ENCODE measurements at regions of chr11 and their contacts with region 1.

Region 1: GRCh38 chr11:130861902-130862860 is 54.1 kb downstream of the SNX19 start:
- DNase-seq: peak; percentile 89
- H3K4me3 Mint-ChIP-seq: no peak overlapping the region
- H3K27ac Mint-ChIP-seq: no peak overlapping the region
- H3K4me1 Mint-ChIP-seq: peaks cover 3% of the 10 kb centered on the region
- H3K27me3 Mint-ChIP-seq: peaks cover under 1% of the 10 kb centered on the region

Region 2: DNA sequence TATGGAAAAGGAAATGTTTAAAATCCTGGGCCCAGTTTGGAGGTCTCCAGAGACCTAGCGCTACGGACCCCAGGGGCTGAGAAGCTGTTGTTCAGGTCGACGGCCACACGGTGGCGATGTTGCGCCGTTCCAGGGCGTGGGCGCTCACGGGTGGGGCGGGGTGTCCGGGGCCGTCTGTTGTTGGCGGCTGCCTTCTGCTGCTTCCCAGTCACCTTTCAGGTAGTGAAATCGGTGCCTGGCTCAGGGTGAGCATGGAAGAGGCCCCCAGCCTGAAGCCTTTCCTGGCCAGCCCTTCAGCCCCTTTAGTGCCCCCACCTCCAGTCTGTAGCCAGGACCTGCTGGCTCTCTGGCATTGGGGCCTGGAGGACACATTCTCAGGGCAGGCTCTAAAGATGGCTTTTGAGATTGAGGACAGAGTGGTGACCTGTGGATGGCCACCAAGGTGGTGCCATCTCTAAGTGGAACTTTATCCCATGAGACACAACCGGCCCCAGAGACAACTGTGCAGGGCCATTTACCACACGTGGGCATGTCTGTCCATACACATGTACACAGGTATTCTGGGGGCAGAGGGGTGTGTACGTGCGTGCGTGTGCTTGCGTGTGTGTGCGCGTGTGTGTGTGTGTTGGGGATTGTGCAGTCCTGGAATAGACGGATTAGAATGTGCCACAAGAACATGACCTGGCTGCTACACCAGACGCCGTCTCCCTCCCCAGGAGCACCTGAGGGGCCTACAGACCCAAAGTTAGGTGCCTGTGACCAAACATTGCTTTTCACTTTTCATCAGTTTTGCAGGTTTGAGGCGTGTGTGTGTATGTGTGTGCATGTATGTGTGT is 648.8 kb before region 1 on chr11:
- CTCF ChIA-PET with region 1: interaction called, 22 read pairs
- POLR2A ChIA-PET with region 1: no interaction called
- intact Hi-C with region 1: loop called (anchors 2 kb)
- DNase-seq: peak; percentile 79
- H3K4me3 Mint-ChIP-seq: no peak overlapping the region
- H3K27ac Mint-ChIP-seq: no peak overlapping the region
- H3K4me1 Mint-ChIP-seq: no peaks in the 10 kb centered on the region
- H3K27me3 Mint-ChIP-seq: no peaks in the 10 kb centered on the region

Region 3: DNA sequence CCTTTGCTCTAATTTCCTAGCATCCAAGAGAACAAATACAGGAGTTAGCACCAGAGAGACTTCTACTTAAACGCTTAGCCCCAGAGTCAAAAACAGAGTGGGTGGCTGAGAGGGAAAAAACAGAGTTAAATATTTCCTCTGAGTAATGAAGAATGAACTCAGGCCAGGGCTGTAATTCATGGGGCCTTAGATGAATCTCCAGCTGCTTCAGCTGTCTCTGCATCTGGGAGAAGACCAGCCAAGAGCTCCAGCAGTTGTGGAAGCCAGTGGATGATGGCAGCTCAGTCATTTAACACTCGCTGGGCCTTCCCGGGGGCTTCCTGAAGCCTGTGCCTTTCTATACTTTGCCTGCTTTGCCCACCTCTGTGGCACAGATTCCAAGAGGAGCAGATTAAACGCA is 419.4 kb before region 1 on chr11:
- CTCF ChIA-PET with region 1: interaction called, 347 read pairs
- POLR2A ChIA-PET with region 1: no interaction called
- intact Hi-C with region 1: no loop called
- DNase-seq: no peak
- H3K4me3 Mint-ChIP-seq: no peak overlapping the region
- H3K27ac Mint-ChIP-seq: no peak overlapping the region
- H3K4me1 Mint-ChIP-seq: peaks cover 10% of the 10 kb centered on the region
- H3K27me3 Mint-ChIP-seq: peaks cover 12% of the 10 kb centered on the region

Region 4: GRCh38 chr11:130882138-130882551 is 20.0 kb after region 1 on chr11:
- CTCF ChIA-PET with region 1: interaction called, 27 read pairs
- POLR2A ChIA-PET with region 1: no interaction called
- intact Hi-C with region 1: no loop called
- DNase-seq: no peak
- H3K4me3 Mint-ChIP-seq: no peak overlapping the region
- H3K27ac Mint-ChIP-seq: no peak overlapping the region
- H3K4me1 Mint-ChIP-seq: peaks cover 17% of the 10 kb centered on the region
- H3K27me3 Mint-ChIP-seq: no peaks in the 10 kb centered on the region

Region 5: GRCh38 chr11:130894322-130895025 is 32.3 kb after region 1 on chr11:
- CTCF ChIA-PET with region 1: interaction called, 68 read pairs
- POLR2A ChIA-PET with region 1: no interaction called
- intact Hi-C with region 1: loop called (anchors 1 kb)
- DNase-seq: peak; percentile 80
- H3K4me3 Mint-ChIP-seq: no peak overlapping the region
- H3K27ac Mint-ChIP-seq: no peak overlapping the region
- H3K4me1 Mint-ChIP-seq: no peaks in the 10 kb centered on the region
- H3K27me3 Mint-ChIP-seq: no peaks in the 10 kb centered on the region

Region 6: DNA sequence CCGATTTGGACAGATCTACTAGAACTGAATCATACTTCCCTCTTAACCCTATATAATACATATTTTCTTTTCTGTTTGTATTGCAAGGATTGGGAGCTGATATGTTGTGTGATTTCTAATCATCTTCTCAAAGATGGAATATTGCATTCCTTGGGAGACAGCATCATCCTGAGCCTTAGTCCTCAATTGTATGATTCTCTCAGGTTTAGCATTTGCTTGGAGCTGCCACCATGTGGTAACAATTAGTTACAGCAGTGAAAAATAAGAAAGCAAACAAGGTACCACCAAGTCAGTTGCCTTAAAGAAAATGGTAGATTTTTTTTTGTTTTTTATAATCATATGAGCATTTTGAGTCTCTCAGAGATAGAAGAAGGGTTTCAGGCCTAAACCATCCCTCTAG is 42.2 kb after region 1 on chr11:
- CTCF ChIA-PET with region 1: interaction called, 20 read pairs
- POLR2A ChIA-PET with region 1: no interaction called
- intact Hi-C with region 1: no loop called
- DNase-seq: no peak
- H3K4me3 Mint-ChIP-seq: no peak overlapping the region
- H3K27ac Mint-ChIP-seq: no peak overlapping the region
- H3K4me1 Mint-ChIP-seq: peaks cover 32% of the 10 kb centered on the region
- H3K27me3 Mint-ChIP-seq: no peaks in the 10 kb centered on the region

Region 7: GRCh38 chr11:130916238-130916855 is 54.2 kb after region 1 on chr11 and contains the start of gene SNX19:
- CTCF ChIA-PET with region 1: interaction called, 19 read pairs
- POLR2A ChIA-PET with region 1: no interaction called
- intact Hi-C with region 1: no loop called
- DNase-seq: peak; percentile 94
- H3K4me3 Mint-ChIP-seq: peak within 1 kb of the TSS; percentile 79
- H3K27ac Mint-ChIP-seq: peak within 1 kb of the TSS; percentile 58
- H3K4me1 Mint-ChIP-seq: peaks cover 34% of the 10 kb centered on the region
- H3K27me3 Mint-ChIP-seq: peaks cover 7% of the 10 kb centered on the region
- total RNA-seq, gene SNX19: 26.0 to 27.0 TPM